Panc1 (cell line): ENCODE measurements at regions of chr17 and their contacts with region 1.

Region 1: DNA sequence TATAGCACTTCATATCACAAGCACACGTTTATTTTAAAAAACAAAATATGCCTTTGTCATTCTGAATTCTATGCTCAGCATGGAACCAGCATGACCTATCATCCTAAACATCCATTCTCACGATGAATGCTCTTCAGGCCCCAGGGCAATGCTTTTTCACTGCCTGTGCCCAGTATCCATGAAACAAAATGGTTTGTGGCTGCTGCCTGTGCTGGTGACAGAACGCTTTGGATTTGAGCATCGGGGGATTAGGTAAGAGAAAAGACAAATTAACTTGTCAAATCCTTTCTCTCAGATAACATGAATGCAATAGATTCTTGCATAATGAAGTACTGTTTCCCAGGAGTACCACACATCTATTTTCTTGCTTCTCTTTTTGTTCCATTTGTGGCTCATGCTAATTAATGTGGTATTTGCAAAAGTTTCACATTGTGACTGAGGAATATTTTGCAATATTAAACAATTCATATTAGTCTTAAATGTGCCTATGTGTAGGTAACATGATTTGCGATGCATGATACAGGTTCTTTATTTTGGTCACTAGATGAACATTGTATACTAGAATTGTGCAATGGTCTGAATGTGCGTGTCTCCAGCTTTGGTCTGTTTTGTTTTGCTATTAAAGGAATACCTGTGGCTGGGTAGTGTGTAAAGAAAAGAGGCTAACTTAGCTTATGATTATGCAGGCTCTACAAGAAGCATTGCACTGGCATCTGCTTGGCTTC is 25.8 kb upstream of the SRSF1 start:
- DNase-seq: no peak
- ATAC-seq: 0 out of 2 replicates have a peak, but pooled peaks have one; percentile 42
- H3K4me3 ChIP-seq: no peak overlapping the region
- H3K27ac ChIP-seq: no peak overlapping the region
- H3K4me1 ChIP-seq: no peaks in the 10 kb centered on the region
- H3K27me3 ChIP-seq: no peaks in the 10 kb centered on the region
- CTCF ChIP-seq: no peak

Region 2: DNA sequence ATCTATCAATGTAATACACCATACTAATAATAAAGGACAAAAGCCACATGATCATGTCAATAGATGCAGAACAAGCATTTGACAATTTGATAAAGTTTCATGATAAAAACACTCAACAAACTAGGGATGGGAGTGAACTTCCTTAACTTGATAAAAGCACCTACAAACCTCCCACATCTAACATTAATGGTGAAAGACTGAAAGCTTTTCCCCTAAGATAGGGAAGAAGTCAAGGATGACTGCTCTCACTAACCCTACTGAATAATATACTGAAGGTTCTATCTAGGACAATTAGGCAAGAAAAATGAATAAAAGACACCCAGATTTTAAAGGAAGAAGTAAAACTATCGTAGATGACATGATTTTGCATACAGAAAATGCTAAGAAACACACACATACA is 40.0 kb after region 1 on chr17:
- CTCF ChIA-PET with region 1: no interaction called
- POLR2A ChIA-PET with region 1: interaction called, 13 read pairs
- in situ Hi-C with region 1: no loop called
- intact Hi-C with region 1: no loop called
- DNase-seq: no peak
- ATAC-seq: no peak
- H3K4me3 ChIP-seq: no peak overlapping the region
- H3K27ac ChIP-seq: no peak overlapping the region
- H3K4me1 ChIP-seq: no peaks in the 10 kb centered on the region
- H3K27me3 ChIP-seq: peaks cover 11% of the 10 kb centered on the region
- CTCF ChIP-seq: no peak

Region 3: GRCh38 chr17:58184308-58184985 is 151.6 kb after region 1 on chr17:
- CTCF ChIA-PET with region 1: no interaction called
- POLR2A ChIA-PET with region 1: no interaction called
- in situ Hi-C with region 1: no loop called
- intact Hi-C with region 1: no loop called
- DNase-seq: no peak
- ATAC-seq: no peak
- H3K4me3 ChIP-seq: no peak overlapping the region
- H3K27ac ChIP-seq: no peak overlapping the region
- H3K4me1 ChIP-seq: no peaks in the 10 kb centered on the region
- H3K27me3 ChIP-seq: no peaks in the 10 kb centered on the region; the same call in 1 of the 2 replicates
- CTCF ChIP-seq: no peak